Activated B cell treated with CpG ODN at 0.5 μM for 24 hours (primary cell): ENCODE measurements at regions of chr1 and their contacts with region 1.

Region 1: GRCh38 chr1:46247436-46248121 is at the start of gene RAD54L:
- DNase-seq: peak; percentile 86
- ATAC-seq: peak; percentile 96
- H3K4me3 Mint-ChIP-seq: peak within 1 kb of the TSS; percentile 95
- H3K27ac Mint-ChIP-seq: peak within 1 kb of the TSS; percentile 86
- H3K4me1 Mint-ChIP-seq: peaks cover 19% of the 10 kb centered on the region
- H3K27me3 Mint-ChIP-seq: no peaks in the 10 kb centered on the region
- CTCF ChIP-seq: no peak
- total RNA-seq, gene RAD54L: 2.9 and 3.7 TPM in 2 replicates

Region 2: GRCh38 chr1:45550401-45551351 is 696.9 kb before region 1 on chr1 and contains the start of gene AKR1A1:
- CTCF ChIA-PET with region 1: no interaction called
- POLR2A ChIA-PET with region 1: no interaction called
- intact Hi-C with region 1: loop called (anchors 2 kb)
- DNase-seq: peak; percentile 91
- ATAC-seq: peak; percentile 91
- H3K4me3 Mint-ChIP-seq: peak within 1 kb of the TSS; percentile 99
- H3K27ac Mint-ChIP-seq: peak within 1 kb of the TSS; percentile 95
- H3K4me1 Mint-ChIP-seq: peaks cover 35% of the 10 kb centered on the region
- H3K27me3 Mint-ChIP-seq: no peaks in the 10 kb centered on the region
- CTCF ChIP-seq: no peak
- total RNA-seq, gene AKR1A1: 215 and 218 TPM in 2 replicates

Region 3: DNA sequence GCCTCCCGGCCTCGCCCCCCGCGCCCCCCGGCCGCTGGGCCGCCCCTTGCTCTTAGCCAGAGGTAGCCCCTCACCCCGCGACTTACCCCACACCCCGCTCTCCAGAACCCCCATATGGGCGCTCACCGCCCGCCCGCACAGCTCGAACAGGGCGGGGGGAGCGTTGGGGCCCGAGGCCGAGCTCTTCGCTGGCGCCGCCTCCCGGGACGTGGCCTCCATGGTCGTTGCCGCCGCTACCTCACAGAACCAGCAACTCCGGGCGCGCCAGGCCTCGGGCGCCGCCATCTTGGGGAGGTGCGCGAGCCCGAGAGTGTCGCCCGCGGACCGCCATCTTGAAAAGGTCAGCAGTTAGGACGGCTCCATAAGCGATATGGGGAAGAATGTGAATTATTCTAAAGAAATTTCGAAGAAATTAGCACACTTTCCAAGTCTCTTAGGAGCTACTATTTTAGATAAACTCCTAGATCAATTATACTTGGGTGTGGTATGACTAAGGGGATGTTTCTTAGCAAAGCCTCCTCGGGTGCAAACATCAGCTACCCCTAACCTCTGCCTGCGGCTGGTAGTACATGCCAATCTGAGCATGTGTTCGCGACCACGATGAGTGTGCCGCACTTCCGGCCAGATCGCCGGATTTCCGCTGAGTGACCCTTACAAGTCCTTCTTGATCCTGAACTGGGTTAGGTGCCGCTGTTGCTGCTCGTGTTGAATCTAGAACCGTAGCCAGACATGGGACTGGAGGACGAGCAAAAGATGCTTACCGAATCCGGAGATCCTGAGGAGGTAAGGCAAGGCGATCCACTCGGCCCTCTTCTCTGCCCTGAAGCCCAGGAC is 55.7 kb after region 1 on chr1 and contains the starts of genes LRRC41 and UQCRH:
- CTCF ChIA-PET with region 1: interaction called, 5 read pairs
- POLR2A ChIA-PET with region 1: interaction called, 31 read pairs
- intact Hi-C with region 1: loop called (anchors 1 kb)
- DNase-seq: peak; percentile 89
- ATAC-seq: peak; percentile 82
- H3K4me3 Mint-ChIP-seq: peak within 1 kb of the TSS; percentile 99
- H3K27ac Mint-ChIP-seq: peak within 1 kb of the TSS; percentile 97
- H3K4me1 Mint-ChIP-seq: peaks cover 64% of the 10 kb centered on the region
- H3K27me3 Mint-ChIP-seq: no peaks in the 10 kb centered on the region
- CTCF ChIP-seq: no peak
- total RNA-seq, gene LRRC41: 59.5 and 60.2 TPM in 2 replicates
- total RNA-seq, gene UQCRH: 243 and 279 TPM in 2 replicates

Region 4: GRCh38 chr1:46603858-46604549 is 356.4 kb after region 1 on chr1 and contains the start of gene MKNK1:
- CTCF ChIA-PET with region 1: no interaction called
- POLR2A ChIA-PET with region 1: no interaction called
- intact Hi-C with region 1: loop called (anchors 2 kb)
- DNase-seq: peak; percentile 97
- ATAC-seq: peak; percentile 99
- H3K4me3 Mint-ChIP-seq: peak within 1 kb of the TSS; percentile 95
- H3K27ac Mint-ChIP-seq: peak within 1 kb of the TSS; percentile 86
- H3K4me1 Mint-ChIP-seq: peaks cover 17% of the 10 kb centered on the region
- H3K27me3 Mint-ChIP-seq: no peaks in the 10 kb centered on the region
- CTCF ChIP-seq: no peak
- total RNA-seq, gene MKNK1: 42.3 and 45.0 TPM in 2 replicates

Region 5: DNA sequence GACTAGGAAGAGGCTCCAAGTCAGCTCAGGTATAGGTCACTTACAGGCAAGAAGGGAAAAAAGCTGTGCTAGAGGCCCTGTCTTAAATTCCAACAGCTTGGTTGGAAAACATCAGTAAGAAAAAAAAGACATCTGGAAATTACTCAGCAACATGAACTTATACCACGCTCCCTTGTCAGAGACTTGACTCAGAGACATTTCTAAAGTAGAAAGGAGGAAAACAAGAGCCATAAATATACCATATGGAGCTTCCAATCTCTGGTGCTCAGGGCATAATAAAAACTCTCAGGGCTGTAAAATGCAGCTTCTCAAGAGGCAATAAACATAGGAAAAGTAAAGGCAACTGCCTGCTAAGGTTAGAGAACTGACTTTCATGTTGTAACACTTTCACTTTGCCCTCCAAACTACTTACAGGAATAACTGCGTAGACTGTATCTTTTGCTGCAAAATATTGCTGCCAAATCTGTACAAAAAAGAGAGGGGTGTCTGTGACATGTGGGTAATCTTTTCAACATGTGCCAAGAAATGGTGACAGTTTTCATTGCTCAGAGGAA is 405.9 kb after region 1 on chr1:
- CTCF ChIA-PET with region 1: no interaction called
- POLR2A ChIA-PET with region 1: no interaction called
- intact Hi-C with region 1: no loop called
- DNase-seq: no peak
- ATAC-seq: no peak
- H3K4me3 Mint-ChIP-seq: no peak overlapping the region
- H3K27ac Mint-ChIP-seq: no peak overlapping the region
- H3K4me1 Mint-ChIP-seq: no peaks in the 10 kb centered on the region
- H3K27me3 Mint-ChIP-seq: no peaks in the 10 kb centered on the region
- CTCF ChIP-seq: no peak